Activated CD4-positive, alpha-beta memory T cell treated with anti-CD3 and anti-CD28 coated beads for 36 hours (primary cell): ENCODE measurements at regions of chr1 and their contacts with region 1.

Region 1: DNA sequence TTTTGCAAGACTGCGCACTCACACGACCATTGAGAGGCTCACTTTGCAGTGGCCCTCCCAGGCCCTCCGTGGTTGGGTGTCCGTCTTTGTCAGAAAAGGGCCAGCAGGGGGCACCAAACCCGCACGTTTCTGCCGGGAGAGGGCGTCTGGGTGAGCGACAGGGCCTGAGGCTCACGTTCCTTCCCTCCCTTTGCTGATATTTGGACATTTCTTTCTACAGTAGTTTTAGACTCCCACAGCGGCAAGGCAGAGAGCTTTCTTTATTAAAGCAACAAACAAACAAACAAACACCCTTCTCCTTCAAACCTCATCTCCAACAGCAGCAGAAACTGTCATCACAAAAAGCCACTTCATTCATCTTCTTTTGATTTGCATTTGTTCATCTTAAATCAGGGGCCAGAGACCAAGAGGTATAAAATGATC is 79.2 kb upstream of the WDR26 start:
- DNase-seq: peak; percentile 91
- H3K4me3 Mint-ChIP-seq: no peak overlapping the region
- H3K27ac Mint-ChIP-seq: no peak overlapping the region
- H3K4me1 Mint-ChIP-seq: peaks cover 3% of the 10 kb centered on the region
- H3K27me3 Mint-ChIP-seq: no peaks in the 10 kb centered on the region

Region 2: GRCh38 chr1:224503161-224504118 is 10.4 kb before region 1 on chr1:
- CTCF ChIA-PET with region 1: interaction called, 30 read pairs
- POLR2A ChIA-PET with region 1: no interaction called
- intact Hi-C with region 1: no loop called
- DNase-seq: peak; percentile 23
- H3K4me3 Mint-ChIP-seq: no peak overlapping the region
- H3K27ac Mint-ChIP-seq: no peak overlapping the region
- H3K4me1 Mint-ChIP-seq: peaks cover 27% of the 10 kb centered on the region
- H3K27me3 Mint-ChIP-seq: no peaks in the 10 kb centered on the region

Region 3: DNA sequence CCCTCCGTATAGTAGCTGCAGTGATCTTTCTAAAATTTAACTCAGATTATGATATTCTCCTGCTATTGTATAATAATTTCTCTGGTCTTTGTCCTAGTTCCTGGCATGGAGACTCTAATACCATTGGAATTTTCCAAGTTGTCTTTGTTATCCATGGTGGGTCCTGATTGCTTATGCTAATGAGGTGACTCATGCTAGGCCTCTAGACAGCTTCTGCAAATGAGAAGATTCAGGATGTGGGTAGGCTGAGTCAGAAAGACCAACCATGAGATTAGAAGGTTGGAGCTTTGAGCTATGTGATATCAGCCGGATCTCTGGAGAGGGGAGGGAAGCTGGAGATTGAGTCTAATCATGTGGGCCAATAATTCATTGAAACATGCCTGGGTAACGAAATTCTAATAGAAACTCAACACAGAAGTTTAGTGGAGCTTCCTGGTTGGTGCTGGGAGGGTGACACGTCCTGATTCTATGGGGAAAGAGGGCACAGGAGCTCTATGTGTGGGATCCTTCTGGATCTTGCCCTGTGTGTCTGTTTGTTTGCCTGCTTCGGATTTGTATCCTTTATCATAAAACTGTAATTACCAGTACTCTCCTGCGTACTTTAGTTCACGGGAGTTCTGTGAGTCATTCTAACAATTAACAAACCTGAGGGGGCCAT is 29.1 kb after region 1 on chr1:
- CTCF ChIA-PET with region 1: interaction called, 28 read pairs
- POLR2A ChIA-PET with region 1: no interaction called
- intact Hi-C with region 1: no loop called
- DNase-seq: peak; percentile 47
- H3K4me3 Mint-ChIP-seq: no peak overlapping the region
- H3K27ac Mint-ChIP-seq: peak overlapping the region; percentile 23
- H3K4me1 Mint-ChIP-seq: peaks cover 18% of the 10 kb centered on the region
- H3K27me3 Mint-ChIP-seq: no peaks in the 10 kb centered on the region

Region 4: GRCh38 chr1:224700915-224701531 is 187.2 kb after region 1 on chr1:
- CTCF ChIA-PET with region 1: interaction called, 5 read pairs
- POLR2A ChIA-PET with region 1: no interaction called
- intact Hi-C with region 1: loop called (anchors 10 kb)
- DNase-seq: no peak
- H3K4me3 Mint-ChIP-seq: no peak overlapping the region
- H3K27ac Mint-ChIP-seq: no peak overlapping the region
- H3K4me1 Mint-ChIP-seq: no peaks in the 10 kb centered on the region
- H3K27me3 Mint-ChIP-seq: no peaks in the 10 kb centered on the region

Region 5: GRCh38 chr1:224922404-224923164 is 408.8 kb after region 1 on chr1:
- CTCF ChIA-PET with region 1: interaction called, 52 read pairs
- POLR2A ChIA-PET with region 1: no interaction called
- intact Hi-C with region 1: loop called (anchors 1 kb)
- DNase-seq: no peak
- H3K4me3 Mint-ChIP-seq: no peak overlapping the region
- H3K27ac Mint-ChIP-seq: no peak overlapping the region
- H3K4me1 Mint-ChIP-seq: no peaks in the 10 kb centered on the region
- H3K27me3 Mint-ChIP-seq: peaks cover 9% of the 10 kb centered on the region